ENCODE measurements at regions of chr12 and their contacts with region 1.

Region 1: GRCh38 chr12:49233842-49234535 is 30.9 kb upstream of the TUBA1C start:
- DNase-seq: no peak
- H3K27ac ChIP-seq: peak overlapping the region; percentile 92
- CTCF ChIP-seq: no peak

Region 2: GRCh38 chr12:49188914-49189367 is 45.0 kb before region 1 on chr12 and contains the start of gene TUBA1A:
- CTCF ChIA-PET with region 1: interaction called, 18 read pairs
- POLR2A ChIA-PET with region 1: interaction called, 3 read pairs
- DNase-seq: peak; percentile 88
- H3K27ac ChIP-seq: peak within 1 kb of the TSS; percentile 96
- CTCF ChIP-seq: no peak

Region 3: DNA sequence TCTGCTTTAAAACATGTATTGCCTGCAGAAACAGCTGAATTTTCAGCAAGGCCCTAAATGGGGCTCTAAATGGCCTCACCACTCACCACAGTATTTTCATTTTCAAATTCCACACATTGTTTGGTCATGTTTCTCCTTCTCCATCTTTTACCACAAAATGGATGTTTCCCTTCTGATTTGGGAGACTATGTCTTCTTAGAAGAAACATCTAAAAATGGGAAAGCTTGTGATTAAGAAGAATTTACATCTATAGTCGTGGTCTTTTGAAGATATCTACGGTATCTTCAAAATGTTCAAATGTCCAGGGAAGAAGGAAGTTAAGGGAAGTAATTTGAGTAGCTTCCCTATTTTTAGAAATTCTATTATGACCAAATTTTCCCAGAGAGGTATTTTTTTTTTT is 10.2 kb after region 1 on chr12:
- CTCF ChIA-PET with region 1: interaction called, 15 read pairs
- POLR2A ChIA-PET with region 1: no interaction called
- DNase-seq: no peak
- H3K27ac ChIP-seq: no peak overlapping the region
- CTCF ChIP-seq: no peak

Measured in RWPE1 (cell line).